ENCODE measurements at regions of chr3 and their contacts with region 1.

Region 1: GRCh38 chr3:58532794-58533220 is 4.2 kb downstream of the ACOX2 start:
- DNase-seq: peak; percentile 77
- H3K4me3 ChIP-seq: no peak overlapping the region
- H3K27ac ChIP-seq: no peak overlapping the region
- H3K4me1 ChIP-seq: peaks cover 24 to 51% (median 36%) of the 10 kb centered on the region in 4 donors
- H3K27me3 ChIP-seq: no peaks in the 10 kb centered on the region
- CTCF ChIP-seq: peak; percentile 91 to 95 (median 93)
- EP300 ChIP-seq: no peak
- POLR2A ChIP-seq: no peak

Region 2: DNA sequence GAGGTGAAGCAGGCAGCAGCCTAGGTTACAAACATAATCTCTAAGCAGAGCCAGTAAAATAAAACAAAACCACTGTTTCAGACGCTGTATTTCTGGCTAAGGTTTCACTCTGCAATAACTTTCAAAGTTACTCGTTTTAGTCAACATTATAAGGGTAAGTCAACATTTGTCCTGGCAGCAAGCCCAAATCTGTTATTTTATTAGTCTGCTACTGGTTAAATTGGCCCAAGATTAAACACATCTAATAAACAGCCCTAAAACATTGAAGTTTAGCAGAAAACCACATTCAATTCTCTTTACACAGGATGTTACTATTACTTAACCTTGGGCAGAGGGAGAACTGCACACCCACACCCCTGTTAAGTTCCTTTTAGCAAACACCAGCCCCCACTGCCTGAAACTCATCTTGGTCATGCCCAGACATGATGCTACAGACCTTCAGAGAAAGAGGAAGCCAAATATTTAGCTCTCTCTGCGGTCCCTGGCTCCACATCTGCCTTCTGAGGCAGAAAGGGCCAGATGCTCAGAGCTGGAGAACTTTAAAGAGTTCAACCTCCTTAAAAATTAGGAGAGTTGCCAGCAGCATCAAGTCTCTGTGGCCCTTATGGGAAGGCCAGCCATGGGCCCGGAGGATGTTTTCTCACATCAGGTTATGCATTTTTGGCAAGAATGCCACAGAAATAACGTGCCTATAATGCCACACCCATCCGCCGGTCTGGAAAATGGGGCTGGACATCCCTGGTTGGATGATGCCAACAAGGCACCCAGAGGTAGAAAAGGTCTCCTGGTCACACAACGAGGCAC is 1749.0 kb before region 1 on chr3:
- in situ Hi-C with region 1: no loop called
- intact Hi-C with region 1: no loop called
- DNase-seq: peak; percentile 60
- H3K4me3 ChIP-seq: no peak overlapping the region
- H3K27ac ChIP-seq: peak overlapping the region; percentile 58 to 74 (median 68)
- H3K4me1 ChIP-seq: peaks cover 5 to 49% (median 33%) of the 10 kb centered on the region in 4 donors
- H3K27me3 ChIP-seq: no peaks in the 10 kb centered on the region
- CTCF ChIP-seq: no peak
- EP300 ChIP-seq: no peak
- POLR2A ChIP-seq: peak; percentile 23

Region 3: GRCh38 chr3:58305882-58306711 is 226.7 kb before region 1 on chr3 and contains the starts of genes HTD2 and RPP14:
- in situ Hi-C with region 1: loop called in 1 of 4 experiments (anchors 25 kb)
- intact Hi-C with region 1: no loop called
- DNase-seq: peak; percentile 99
- H3K4me3 ChIP-seq: peak within 1 kb of the TSS; percentile 65 to 92 (median 87)
- H3K27ac ChIP-seq: peak within 1 kb of the TSS; percentile 95 to 96 (median 96)
- H3K4me1 ChIP-seq: peaks cover 12 to 27% (median 23%) of the 10 kb centered on the region in 4 donors
- H3K27me3 ChIP-seq: peaks cover 9% of the 10 kb centered on the region
- CTCF ChIP-seq: peak; percentile 90 to 99 (median 97)
- EP300 ChIP-seq: no peak
- POLR2A ChIP-seq: peak; percentile 89
- total RNA-seq, gene HTD2: 11.1 to 16.9 (median 16.7) TPM in 3 of 4 donors, not detected in the other
- total RNA-seq, gene RPP14: 9.2 to 25.1 (median 18.8) TPM

Region 4: GRCh38 chr3:58324391-58325390 is 208.1 kb before region 1 on chr3:
- in situ Hi-C with region 1: loop called in 3 of 4 experiments (anchors 5 to 25 kb)
- intact Hi-C with region 1: no loop called
- DNase-seq: no peak
- H3K4me3 ChIP-seq: no peak overlapping the region
- H3K27ac ChIP-seq: peak overlapping the region in 3 of 4 donors; percentile 47 to 66 (median 65)
- H3K4me1 ChIP-seq: peaks cover 3 to 12% (median 10%) of the 10 kb centered on the region in 4 donors
- H3K27me3 ChIP-seq: no peaks in the 10 kb centered on the region
- CTCF ChIP-seq: no peak
- EP300 ChIP-seq: no peak
- POLR2A ChIP-seq: no peak

Region 5: DNA sequence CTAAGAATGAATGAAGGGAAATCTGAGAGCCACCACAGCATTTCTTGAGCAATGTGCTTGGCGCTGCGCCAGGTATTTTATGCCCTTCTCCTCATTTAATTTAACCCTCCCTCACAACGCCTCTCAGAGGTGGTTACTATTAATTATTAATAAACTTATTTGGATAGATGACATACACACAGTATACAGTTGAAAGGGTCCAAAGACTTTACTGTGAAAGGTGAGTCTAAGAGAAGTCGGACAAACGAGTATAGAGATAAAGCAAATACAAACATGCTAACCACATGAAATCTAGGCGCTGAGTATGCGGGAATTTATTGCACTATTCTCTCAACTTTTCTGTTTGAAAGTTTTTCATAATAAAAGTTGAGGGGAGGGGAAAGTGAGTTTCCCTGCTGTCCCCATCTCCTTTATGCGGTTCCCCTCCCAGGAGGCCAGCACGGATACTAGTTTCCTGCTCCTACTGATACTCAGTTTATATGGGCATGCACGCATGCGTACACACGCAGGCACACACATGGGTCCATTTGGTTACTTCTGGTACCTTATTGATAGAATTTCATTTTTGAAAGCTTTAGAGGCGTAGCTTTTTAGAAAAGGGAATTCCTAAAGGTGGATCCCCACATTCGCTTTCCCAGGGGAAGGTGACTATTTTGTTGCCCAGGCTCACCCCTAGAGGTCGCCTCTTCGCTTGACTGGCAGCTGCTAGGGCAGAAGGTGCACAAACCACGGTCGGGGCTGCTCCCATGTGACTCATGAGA is 69.4 kb before region 1 on chr3:
- in situ Hi-C with region 1: loop called in 1 of 4 experiments (anchors 10 kb)
- intact Hi-C with region 1: loop called (anchors 10 kb)
- DNase-seq: peak; percentile 78
- H3K4me3 ChIP-seq: peak overlapping the region in 2 of 4 donors; percentile 1 to 31
- H3K27ac ChIP-seq: no peak overlapping the region
- H3K4me1 ChIP-seq: peaks cover 0 to 14% (median 6%) of the 10 kb centered on the region in 4 donors
- H3K27me3 ChIP-seq: no peaks in the 10 kb centered on the region
- CTCF ChIP-seq: peak; percentile 72 to 82 (median 80)
- EP300 ChIP-seq: no peak
- POLR2A ChIP-seq: no peak

Region 6: DNA sequence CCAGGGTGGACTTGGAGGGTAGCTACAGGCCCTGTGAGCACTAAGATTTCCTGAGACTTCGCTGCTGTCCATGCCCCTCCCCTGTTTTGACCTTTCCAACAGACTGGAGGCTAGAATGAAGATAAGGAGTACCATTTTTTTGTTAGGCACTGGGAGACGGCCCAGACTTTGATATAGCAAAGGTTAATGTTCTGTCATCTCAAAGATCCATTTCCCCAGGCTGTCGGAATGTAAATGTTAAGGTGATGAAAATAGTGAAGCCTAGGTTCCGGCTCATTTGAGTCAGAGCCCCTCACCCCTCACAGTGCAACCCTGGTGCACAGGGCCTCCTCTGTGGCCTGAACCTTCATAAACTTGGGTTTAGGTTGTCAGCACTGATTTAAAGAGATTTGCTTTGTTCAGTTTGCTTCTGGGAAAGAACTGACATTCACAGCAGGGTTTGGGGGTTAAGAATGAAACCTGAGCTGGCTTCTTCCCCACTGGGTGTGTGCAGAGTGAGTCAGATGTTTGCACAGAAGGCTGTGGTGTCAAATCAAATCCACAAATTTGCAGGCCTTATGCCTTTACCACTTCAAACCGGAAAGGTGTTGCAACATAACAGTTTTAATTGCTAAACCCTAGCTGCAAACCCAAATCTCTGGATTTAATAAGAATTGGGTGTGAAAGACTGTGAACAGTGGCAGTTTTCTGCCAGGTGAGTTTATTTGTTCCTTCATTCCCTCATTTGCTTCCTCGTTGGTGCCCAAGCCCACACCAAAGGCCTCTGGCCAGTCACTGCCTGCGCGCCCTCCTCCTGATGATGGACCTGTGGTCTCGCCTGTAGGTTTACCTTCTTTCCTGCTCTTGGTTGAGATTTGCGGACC is 61.6 kb before region 1 on chr3:
- in situ Hi-C with region 1: loop called in 2 of 4 experiments (anchors 10 kb)
- intact Hi-C with region 1: loop called (anchors 10 kb)
- DNase-seq: peak; percentile 64
- H3K4me3 ChIP-seq: no peak overlapping the region
- H3K27ac ChIP-seq: peak overlapping the region; percentile 63 to 78 (median 76)
- H3K4me1 ChIP-seq: peaks cover 6 to 28% (median 21%) of the 10 kb centered on the region in 4 donors
- H3K27me3 ChIP-seq: no peaks in the 10 kb centered on the region
- CTCF ChIP-seq: no peak
- EP300 ChIP-seq: no peak
- POLR2A ChIP-seq: no peak

Region 7: GRCh38 chr3:58556761-58557221 is 24.0 kb after region 1 on chr3:
- in situ Hi-C with region 1: no loop called
- intact Hi-C with region 1: no loop called
- DNase-seq: no peak
- H3K4me3 ChIP-seq: no peak overlapping the region
- H3K27ac ChIP-seq: peak overlapping the region in 1 of 4 donors; percentile 23
- H3K4me1 ChIP-seq: peaks cover 0 to 12% (median 1%) of the 10 kb centered on the region in 4 donors
- H3K27me3 ChIP-seq: no peaks in the 10 kb centered on the region
- CTCF ChIP-seq: no peak
- EP300 ChIP-seq: no peak
- POLR2A ChIP-seq: no peak